K562 (cell line): ENCODE measurements at regions of chrX and their contacts with region 1.

Region 1: GRCh38 chrX:103101280-103102042 is 8.5 kb upstream of the NXF3 start:
- DNase-seq: peak; percentile 39 to 89 (median 52)
- ATAC-seq: peak; percentile 81
- H3K4me3 ChIP-seq: no peak overlapping the region
- H3K27ac ChIP-seq: peak overlapping the region; percentile 35; the same call in 1 of the 3 replicates
- H3K4me1 ChIP-seq: peaks cover 7 to 19% of the 10 kb centered on the region in 2 experiments; a peak in 3 of 5 replicates
- H3K27me3 ChIP-seq: no peaks in the 10 kb centered on the region
- CTCF ChIP-seq: no peak
- EP300 ChIP-seq: peak; percentile 93
- POLR2A ChIP-seq: no peak
- RAD21 ChIP-seq: no peak

Region 2: GRCh38 chrX:102546828-102547493 is 554.5 kb before region 1 on chrX:
- CTCF ChIA-PET with region 1: no interaction called
- POLR2A ChIA-PET with region 1: no interaction called
- in situ Hi-C with region 1: no loop called
- intact Hi-C with region 1: no loop called
- DNase-seq: no peak
- ATAC-seq: no peak
- H3K4me3 ChIP-seq: 0 out of 2 replicates have a peak overlapping the region, but pooled peaks have one; percentile 13
- H3K27ac ChIP-seq: no peak overlapping the region
- H3K4me1 ChIP-seq: peaks cover 0 to 8% of the 10 kb centered on the region in 2 experiments; a peak in 2 of 5 replicates
- H3K27me3 ChIP-seq: peaks cover 0 to 18% of the 10 kb centered on the region in 2 experiments; a peak in 3 of 5 replicates
- CTCF ChIP-seq: no peak
- EP300 ChIP-seq: no peak
- POLR2A ChIP-seq: no peak
- RAD21 ChIP-seq: no peak

Region 3: GRCh38 chrX:103124284-103124683 is 22.8 kb after region 1 on chrX:
- CTCF ChIA-PET with region 1: no interaction called
- POLR2A ChIA-PET with region 1: interaction called, 5 read pairs
- in situ Hi-C with region 1: no loop called
- intact Hi-C with region 1: loop called (anchors 1 kb)
- DNase-seq: peak; percentile 20 to 82 (median 42)
- ATAC-seq: peak; percentile 84
- H3K4me3 ChIP-seq: no peak overlapping the region
- H3K27ac ChIP-seq: no peak overlapping the region
- H3K4me1 ChIP-seq: peaks cover 0 to 10% of the 10 kb centered on the region in 2 experiments; a peak in 3 of 5 replicates
- H3K27me3 ChIP-seq: no peaks in the 10 kb centered on the region
- CTCF ChIP-seq: no peak
- EP300 ChIP-seq: peak; percentile 93
- POLR2A ChIP-seq: no peak
- RAD21 ChIP-seq: no peak

Region 4: DNA sequence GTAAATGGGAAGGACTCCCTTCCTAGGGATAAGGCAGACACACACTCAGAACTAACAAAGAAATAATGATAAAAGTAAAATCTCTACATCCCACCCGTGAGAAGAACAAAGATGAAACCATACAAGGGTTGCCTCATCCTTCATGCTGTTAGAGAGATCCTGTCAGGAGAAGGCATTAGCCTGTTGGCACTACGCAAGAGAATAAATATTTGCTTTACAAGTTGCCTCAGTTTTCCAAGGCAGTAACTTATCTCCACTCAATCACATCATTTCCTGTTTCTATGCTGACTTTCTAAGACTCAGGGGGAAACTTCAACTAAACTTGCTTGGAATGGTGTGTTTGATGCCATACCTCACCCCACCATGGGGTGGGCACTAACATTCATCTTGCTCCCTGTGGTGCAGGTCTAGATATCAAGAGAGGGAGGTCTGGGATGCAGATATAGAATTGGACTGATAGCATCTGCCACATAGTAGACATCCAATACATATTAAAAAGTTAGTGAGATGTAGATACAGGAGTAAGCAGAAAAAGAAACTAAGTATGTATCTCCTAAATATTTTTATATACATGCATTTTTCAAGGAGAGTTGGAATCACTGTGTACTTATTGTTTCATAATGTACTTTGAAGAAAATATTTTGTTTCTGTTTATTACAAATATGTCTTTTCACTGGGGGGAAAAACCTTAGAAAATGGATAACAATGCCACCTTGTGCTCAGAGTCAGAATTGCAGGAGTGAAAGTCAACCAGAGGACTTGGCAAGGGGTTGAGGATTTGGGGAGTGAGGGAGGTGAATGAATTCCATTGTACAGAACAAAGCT is 56.2 kb after region 1 on chrX:
- CTCF ChIA-PET with region 1: no interaction called
- POLR2A ChIA-PET with region 1: no interaction called
- in situ Hi-C with region 1: no loop called
- intact Hi-C with region 1: loop called (anchors 5 kb)
- DNase-seq: peak; percentile 29 to 60 (median 33)
- ATAC-seq: peak; percentile 71; the same call in 2 of the 3 replicates
- H3K4me3 ChIP-seq: no peak overlapping the region
- H3K27ac ChIP-seq: no peak overlapping the region
- H3K4me1 ChIP-seq: no peaks in the 10 kb centered on the region
- H3K27me3 ChIP-seq: no peaks in the 10 kb centered on the region
- CTCF ChIP-seq: peak; percentile 59 to 75 (median 64); a peak in 5 of 6 replicates
- EP300 ChIP-seq: no peak
- POLR2A ChIP-seq: no peak
- RAD21 ChIP-seq: peak; percentile 57 to 77

Region 5: DNA sequence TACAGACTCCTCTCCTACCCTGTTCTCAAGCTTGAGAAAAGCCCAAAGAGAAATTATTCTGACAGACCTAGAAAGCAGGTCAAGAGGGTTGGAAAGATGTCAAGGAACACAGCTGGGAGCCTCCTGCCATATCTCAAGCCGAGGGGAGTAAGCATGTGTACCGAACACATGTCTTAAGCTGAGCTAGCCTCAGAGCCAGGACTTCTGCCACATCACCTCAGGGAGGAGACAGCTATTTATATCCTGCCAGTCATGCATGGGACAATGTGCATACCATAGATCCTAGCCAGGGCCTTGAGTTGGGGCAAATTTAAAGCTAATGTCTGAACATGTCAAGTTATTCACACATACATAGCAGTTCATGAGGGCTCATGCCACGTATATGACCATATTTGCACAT is 621.0 kb after region 1 on chrX:
- CTCF ChIA-PET with region 1: no interaction called
- POLR2A ChIA-PET with region 1: no interaction called
- in situ Hi-C with region 1: no loop called
- intact Hi-C with region 1: no loop called
- DNase-seq: no peak
- ATAC-seq: no peak
- H3K4me3 ChIP-seq: no peak overlapping the region
- H3K27ac ChIP-seq: no peak overlapping the region
- H3K4me1 ChIP-seq: no peaks in the 10 kb centered on the region
- H3K27me3 ChIP-seq: peaks cover 2 to 58% of the 10 kb centered on the region in 2 experiments; a peak in 3 of 5 replicates
- CTCF ChIP-seq: no peak
- EP300 ChIP-seq: no peak
- POLR2A ChIP-seq: no peak
- RAD21 ChIP-seq: no peak